T-cell (primary cell): ENCODE measurements at regions of chr10 and their contacts with region 1.

Region 1: GRCh38 chr10:76382381-76382851 is 951.0 kb downstream of the LRMDA start:
- DNase-seq: no peak
- ATAC-seq: no peak
- H3K4me3 ChIP-seq: no peak overlapping the region
- H3K4me3 Mint-ChIP-seq: no peak overlapping the region
- H3K27ac ChIP-seq: no peak overlapping the region
- H3K27ac Mint-ChIP-seq: no peak overlapping the region
- H3K4me1 ChIP-seq: no peaks in the 10 kb centered on the region
- H3K4me1 Mint-ChIP-seq: no peaks in the 10 kb centered on the region
- H3K27me3 ChIP-seq: no peaks in the 10 kb centered on the region
- H3K27me3 Mint-ChIP-seq: no peaks in the 10 kb centered on the region

Region 2: DNA sequence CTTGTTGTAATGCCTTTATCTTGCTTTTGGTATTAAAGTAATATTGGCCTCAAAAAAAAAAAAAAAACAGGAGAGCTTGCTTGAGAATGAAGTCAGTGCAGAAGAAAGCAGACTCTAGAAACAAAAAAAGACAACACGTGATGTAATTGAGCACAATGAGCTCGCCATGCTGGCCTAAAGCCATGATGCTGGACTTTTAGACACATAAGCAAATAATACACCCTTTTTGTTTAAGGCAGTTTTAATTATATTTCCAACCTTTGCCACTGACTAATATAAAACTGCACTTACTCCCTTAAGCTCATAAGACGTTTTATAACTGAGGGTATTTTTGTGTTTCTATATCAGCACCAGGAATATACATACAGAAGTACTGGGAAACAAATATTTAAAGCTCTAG is 456.9 kb after region 1 on chr10:
- CTCF ChIA-PET with region 1: interaction called in 1 of 2 experiments, 10 read pairs
- POLR2A ChIA-PET with region 1: no interaction called
- DNase-seq: no peak
- ATAC-seq: no peak
- H3K4me3 ChIP-seq: no peak overlapping the region
- H3K4me3 Mint-ChIP-seq: no peak overlapping the region
- H3K27ac ChIP-seq: no peak overlapping the region
- H3K27ac Mint-ChIP-seq: no peak overlapping the region
- H3K4me1 ChIP-seq: no peaks in the 10 kb centered on the region
- H3K4me1 Mint-ChIP-seq: no peaks in the 10 kb centered on the region
- H3K27me3 ChIP-seq: peaks cover 0 to 4% of the 10 kb centered on the region in 2 experiments
- H3K27me3 Mint-ChIP-seq: no peaks in the 10 kb centered on the region